ENCODE measurements at regions of chr1 and their contacts with region 1.

Region 1: GRCh38 chr1:97050501-97050900 is 328.9 kb downstream of the PTBP2 start:
- H3K4me3 ChIP-seq: no peak overlapping the region
- H3K27ac ChIP-seq: no peak overlapping the region
- H3K4me1 ChIP-seq: no peaks in the 10 kb centered on the region
- CTCF ChIP-seq: no peak

Region 2: GRCh38 chr1:96962751-96963225 is 87.7 kb before region 1 on chr1:
- CTCF ChIA-PET with region 1: interaction called, 19 read pairs
- POLR2A ChIA-PET with region 1: no interaction called
- H3K4me3 ChIP-seq: no peak overlapping the region
- H3K27ac ChIP-seq: no peak overlapping the region
- H3K4me1 ChIP-seq: no peaks in the 10 kb centered on the region
- CTCF ChIP-seq: no peak

Measured in HEK293 (cell line).